ENCODE measurements at regions of chr9 and their contacts with region 1.

Region 1: GRCh38 chr9:120985810-120986222 is 59.2 kb upstream of the TRAF1 start:
- DNase-seq: no peak
- ATAC-seq: no peak
- H3K4me3 ChIP-seq: no peak overlapping the region
- H3K4me3 Mint-ChIP-seq: no peak overlapping the region
- H3K27ac ChIP-seq: no peak overlapping the region
- H3K27ac Mint-ChIP-seq: no peak overlapping the region
- H3K4me1 ChIP-seq: peaks cover 0 to 3% of the 10 kb centered on the region in 2 experiments
- H3K4me1 Mint-ChIP-seq: peaks cover 0 to 5% (median 4%) of the 10 kb centered on the region in 3 donors
- H3K27me3 ChIP-seq: no peaks in the 10 kb centered on the region
- H3K27me3 Mint-ChIP-seq: no peaks in the 10 kb centered on the region

Region 2: DNA sequence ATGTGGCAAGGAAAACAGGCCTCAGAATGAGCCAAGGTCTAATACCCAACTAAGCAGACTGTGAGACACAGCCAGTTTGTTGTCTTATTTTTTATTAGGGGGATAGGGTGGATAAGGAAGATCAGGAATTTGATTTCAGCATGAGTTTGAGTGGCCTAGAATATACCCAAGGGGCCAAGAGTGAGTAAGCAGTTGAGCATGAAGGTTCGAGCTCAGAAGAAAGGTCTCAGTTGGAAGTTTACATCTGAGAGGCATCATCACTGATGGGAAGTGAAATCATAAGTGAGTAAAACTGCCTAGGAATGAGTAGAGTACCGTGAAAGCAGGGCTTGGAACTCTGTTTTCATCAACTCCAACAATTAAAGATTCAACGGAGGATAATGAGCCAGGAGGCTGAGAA is 155.7 kb before region 1 on chr9:
- CTCF ChIA-PET with region 1: interaction called in 1 of 2 experiments, 10 read pairs
- POLR2A ChIA-PET with region 1: no interaction called
- DNase-seq: no peak
- ATAC-seq: no peak
- H3K4me3 ChIP-seq: no peak overlapping the region
- H3K4me3 Mint-ChIP-seq: no peak overlapping the region
- H3K27ac ChIP-seq: no peak overlapping the region
- H3K27ac Mint-ChIP-seq: no peak overlapping the region
- H3K4me1 ChIP-seq: no peaks in the 10 kb centered on the region
- H3K4me1 Mint-ChIP-seq: peaks cover 0 to 2% (median 2%) of the 10 kb centered on the region in 3 donors
- H3K27me3 ChIP-seq: no peaks in the 10 kb centered on the region
- H3K27me3 Mint-ChIP-seq: no peaks in the 10 kb centered on the region

Region 3: GRCh38 chr9:121071756-121072421 is 86.1 kb after region 1 on chr9:
- CTCF ChIA-PET with region 1: interaction called in 1 of 2 experiments, 10 read pairs
- POLR2A ChIA-PET with region 1: no interaction called
- DNase-seq: peak in 15 of 35 experiments; percentile 3 to 62 (median 16)
- ATAC-seq: peak in 3 of 4 experiments; percentile 3 to 13 (median 6)
- H3K4me3 ChIP-seq: peak overlapping the region; percentile 36 to 59
- H3K4me3 Mint-ChIP-seq: peak overlapping the region; percentile 91 to 100 (median 97)
- H3K27ac ChIP-seq: peak overlapping the region; percentile 58
- H3K27ac Mint-ChIP-seq: peak overlapping the region; percentile 88 to 93
- H3K4me1 ChIP-seq: peaks cover 8 to 21% of the 10 kb centered on the region in 2 experiments
- H3K4me1 Mint-ChIP-seq: peaks cover 42 to 53% (median 43%) of the 10 kb centered on the region in 3 donors
- H3K27me3 ChIP-seq: no peaks in the 10 kb centered on the region
- H3K27me3 Mint-ChIP-seq: no peaks in the 10 kb centered on the region

Region 4: GRCh38 chr9:121222524-121223171 is 236.8 kb after region 1 on chr9:
- CTCF ChIA-PET with region 1: no interaction called
- POLR2A ChIA-PET with region 1: no interaction called
- DNase-seq: peak in 1 of 35 experiments; percentile 36
- ATAC-seq: no peak
- H3K4me3 ChIP-seq: no peak overlapping the region
- H3K4me3 Mint-ChIP-seq: no peak overlapping the region
- H3K27ac ChIP-seq: no peak overlapping the region
- H3K27ac Mint-ChIP-seq: no peak overlapping the region
- H3K4me1 ChIP-seq: no peaks in the 10 kb centered on the region
- H3K4me1 Mint-ChIP-seq: no peaks in the 10 kb centered on the region
- H3K27me3 ChIP-seq: no peaks in the 10 kb centered on the region
- H3K27me3 Mint-ChIP-seq: no peaks in the 10 kb centered on the region